ENCODE measurements at regions of chr2 and their contacts with region 1.

Region 1: GRCh38 chr2:119301413-119301812 is 65.2 kb downstream of the C2orf76 start:
- DNase-seq: no peak
- ATAC-seq: no peak
- H3K4me3 ChIP-seq: no peak overlapping the region
- H3K27ac ChIP-seq: no peak overlapping the region
- H3K4me1 ChIP-seq: no peaks in the 10 kb centered on the region
- H3K27me3 ChIP-seq: no peaks in the 10 kb centered on the region
- CTCF ChIP-seq: no peak

Region 2: GRCh38 chr2:118148809-118149208 is 1152.6 kb before region 1 on chr2:
- CTCF ChIA-PET with region 1: no interaction called
- POLR2A ChIA-PET with region 1: interaction called, 13 read pairs
- in situ Hi-C with region 1: no loop called
- intact Hi-C with region 1: no loop called
- DNase-seq: no peak
- ATAC-seq: no peak
- H3K4me3 ChIP-seq: no peak overlapping the region
- H3K27ac ChIP-seq: no peak overlapping the region
- H3K4me1 ChIP-seq: no peaks in the 10 kb centered on the region
- H3K27me3 ChIP-seq: peaks cover 5% of the 10 kb centered on the region; the same call in 1 of the 2 replicates
- CTCF ChIP-seq: no peak; the same call in 1 of the 2 replicates

Measured in Panc1 (cell line).